ENCODE measurements at regions of chr12 and their contacts with region 1.

Region 1: GRCh38 chr12:50222275-50222795 is 55.2 kb upstream of the CERS5 start:
- DNase-seq: peak; percentile 95
- ATAC-seq: peak; percentile 84
- H3K4me3 ChIP-seq: peak overlapping the region; percentile 75
- H3K27ac ChIP-seq: peak overlapping the region; percentile 100
- H3K4me1 ChIP-seq: peaks cover 12% of the 10 kb centered on the region
- H3K27me3 ChIP-seq: no peaks in the 10 kb centered on the region
- CTCF ChIP-seq: peak; percentile 41
- POLR2A ChIP-seq: peak; percentile 92
- RAD21 ChIP-seq: peak; percentile 58

Region 2: GRCh38 chr12:50246873-50247612 is 24.7 kb after region 1 on chr12:
- CTCF ChIA-PET with region 1: interaction called, 4 read pairs
- POLR2A ChIA-PET with region 1: interaction called, 3 read pairs
- dilution Hi-C with region 1: no loop called
- in situ Hi-C with region 1: no loop called
- intact Hi-C with region 1: loop called (anchors 1 kb)
- DNase-seq: peak; percentile 99
- ATAC-seq: peak; percentile 74
- H3K4me3 ChIP-seq: no peak overlapping the region
- H3K27ac ChIP-seq: peak overlapping the region; percentile 83
- H3K4me1 ChIP-seq: peaks cover 21% of the 10 kb centered on the region
- H3K27me3 ChIP-seq: no peaks in the 10 kb centered on the region
- CTCF ChIP-seq: no peak
- POLR2A ChIP-seq: no peak
- RAD21 ChIP-seq: no peak

Region 3: GRCh38 chr12:50276921-50277671 is 54.8 kb after region 1 on chr12:
- CTCF ChIA-PET with region 1: interaction called, 3 read pairs
- POLR2A ChIA-PET with region 1: interaction called, 14 read pairs
- dilution Hi-C with region 1: no loop called
- in situ Hi-C with region 1: no loop called
- intact Hi-C with region 1: no loop called
- DNase-seq: peak; percentile 23
- ATAC-seq: no peak; the same call in 1 of the 2 replicates
- H3K4me3 ChIP-seq: no peak overlapping the region
- H3K27ac ChIP-seq: no peak overlapping the region
- H3K4me1 ChIP-seq: peaks cover 4% of the 10 kb centered on the region
- H3K27me3 ChIP-seq: no peaks in the 10 kb centered on the region
- CTCF ChIP-seq: 0 out of 2 replicates have a peak, but pooled peaks have one; percentile 10
- POLR2A ChIP-seq: no peak
- RAD21 ChIP-seq: no peak

Region 4: GRCh38 chr12:50283229-50283923 is 61.0 kb after region 1 on chr12 and contains the start of gene LIMA1:
- CTCF ChIA-PET with region 1: no interaction called
- POLR2A ChIA-PET with region 1: interaction called, 5 read pairs
- dilution Hi-C with region 1: no loop called
- in situ Hi-C with region 1: no loop called
- intact Hi-C with region 1: loop called (anchors 1 kb)
- DNase-seq: peak; percentile 75
- ATAC-seq: peak; percentile 96
- H3K4me3 ChIP-seq: peak within 1 kb of the TSS; percentile 74
- H3K27ac ChIP-seq: peak within 1 kb of the TSS; percentile 92
- H3K4me1 ChIP-seq: peaks cover 2% of the 10 kb centered on the region; the same call in 1 of the 2 replicates
- H3K27me3 ChIP-seq: no peaks in the 10 kb centered on the region
- CTCF ChIP-seq: no peak
- POLR2A ChIP-seq: 0 out of 2 replicates have a peak, but pooled peaks have one; percentile 30
- RAD21 ChIP-seq: no peak
- total RNA-seq, gene LIMA1: 163 and 183 TPM in 2 replicates

Region 5: DNA sequence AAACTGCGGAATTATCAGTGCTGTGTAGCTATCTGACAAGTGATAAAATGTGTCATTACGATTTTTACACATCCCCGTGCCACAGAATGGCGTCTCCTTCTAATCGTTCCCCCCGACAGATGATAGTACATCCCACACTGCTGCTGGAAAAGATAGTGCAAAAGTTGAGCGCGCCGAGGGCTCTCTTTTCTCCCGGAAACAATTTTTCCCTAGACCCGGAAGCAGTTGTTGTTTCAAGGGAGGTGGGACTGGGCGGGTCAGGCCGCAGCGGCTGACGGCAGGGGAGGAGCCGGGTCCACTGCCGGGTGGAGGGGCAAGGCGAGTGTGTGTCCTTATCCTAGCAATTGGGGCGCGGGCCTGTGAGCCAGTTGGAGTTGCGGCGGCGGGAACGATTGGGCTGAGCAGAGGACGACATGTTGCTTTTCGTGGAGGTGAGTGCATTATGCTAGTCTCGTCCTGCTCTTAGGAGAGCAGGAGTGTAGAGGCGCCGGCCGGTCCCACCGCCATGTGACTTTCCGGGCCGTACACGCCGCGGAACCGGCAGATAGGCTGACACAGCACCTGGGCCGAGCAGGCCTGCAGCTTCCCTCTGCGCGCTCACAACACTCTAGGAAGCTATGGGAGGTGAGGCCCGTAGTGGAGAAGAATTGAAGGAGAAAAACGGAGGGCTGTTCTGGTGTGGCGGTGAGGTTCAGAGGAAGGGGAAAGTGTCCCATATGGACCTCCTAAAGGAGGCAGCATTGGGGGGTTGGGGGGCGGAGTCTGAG is 178.4 kb after region 1 on chr12 and contains the start of gene LARP4:
- CTCF ChIA-PET with region 1: no interaction called
- POLR2A ChIA-PET with region 1: no interaction called
- dilution Hi-C with region 1: no loop called
- in situ Hi-C with region 1: no loop called
- intact Hi-C with region 1: loop called (anchors 5 kb)
- DNase-seq: peak; percentile 92
- ATAC-seq: peak; percentile 97
- H3K4me3 ChIP-seq: peak within 1 kb of the TSS; percentile 81
- H3K27ac ChIP-seq: peak within 1 kb of the TSS; percentile 89
- H3K4me1 ChIP-seq: peaks cover 3% of the 10 kb centered on the region
- H3K27me3 ChIP-seq: no peaks in the 10 kb centered on the region
- CTCF ChIP-seq: no peak
- POLR2A ChIP-seq: peak; percentile 85
- RAD21 ChIP-seq: no peak
- total RNA-seq, gene LARP4: 41.7 and 42.5 TPM in 2 replicates

Region 6: DNA sequence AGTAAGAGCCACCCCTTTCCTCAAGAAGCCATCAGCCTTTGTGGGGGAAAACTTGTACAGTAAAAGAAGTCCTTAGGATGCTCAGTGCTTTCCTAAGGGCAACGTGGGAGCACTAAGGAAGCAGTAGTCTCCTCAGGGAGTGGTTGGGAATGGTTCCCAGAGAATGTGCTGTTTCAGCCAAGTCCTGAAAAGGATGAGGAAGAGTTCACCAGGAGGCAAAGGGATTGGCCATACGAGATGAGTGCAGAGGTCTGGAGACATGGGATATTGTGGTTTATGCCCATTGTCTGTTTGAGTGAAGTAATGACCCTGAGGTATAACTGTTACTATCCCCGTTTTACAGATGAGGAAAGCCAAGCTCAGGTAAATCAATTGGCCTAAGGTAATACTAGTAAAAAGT is 455.5 kb after region 1 on chr12:
- CTCF ChIA-PET with region 1: no interaction called
- POLR2A ChIA-PET with region 1: no interaction called
- dilution Hi-C with region 1: no loop called
- in situ Hi-C with region 1: no loop called
- intact Hi-C with region 1: no loop called
- DNase-seq: peak; percentile 57
- ATAC-seq: peak; percentile 53
- H3K4me3 ChIP-seq: no peak overlapping the region
- H3K27ac ChIP-seq: no peak overlapping the region
- H3K4me1 ChIP-seq: peaks cover 5% of the 10 kb centered on the region; the same call in 1 of the 2 replicates
- H3K27me3 ChIP-seq: no peaks in the 10 kb centered on the region
- CTCF ChIP-seq: no peak
- POLR2A ChIP-seq: no peak
- RAD21 ChIP-seq: no peak